Adrenal gland (tissue), 19 donors: ENCODE measurements at regions of chr10 and their contacts with region 1.

Region 1: GRCh38 chr10:43292755-43293676 is 26.2 kb upstream of the RASGEF1A start:
- DNase-seq: peak; percentile 50 to 84 (median 69)
- H3K4me3 ChIP-seq: no peak overlapping the region
- H3K27ac ChIP-seq: no peak overlapping the region
- H3K4me1 ChIP-seq: no peaks in the 10 kb centered on the region
- H3K27me3 ChIP-seq: no peaks in the 10 kb centered on the region
- CTCF ChIP-seq: peak; percentile 53 to 82 (median 70)
- POLR2A ChIP-seq: no peak

Region 2: GRCh38 chr10:43138021-43138756 is 154.8 kb before region 1 on chr10 and contains the start of gene CSGALNACT2:
- intact Hi-C with region 1: no loop called
- DNase-seq: peak; percentile 84 to 92 (median 86)
- H3K4me3 ChIP-seq: peak within 1 kb of the TSS; percentile 64 to 85 (median 78)
- H3K27ac ChIP-seq: peak within 1 kb of the TSS; percentile 48 to 99 (median 95)
- H3K4me1 ChIP-seq: peaks cover 6 to 24% of the 10 kb centered on the region in 2 donors
- H3K27me3 ChIP-seq: no peaks in the 10 kb centered on the region
- CTCF ChIP-seq: peak in 1 of 6 experiments; percentile 3
- POLR2A ChIP-seq: peak; percentile 82 to 88
- total RNA-seq, gene CSGALNACT2: 7.4 to 19.4 (median 13.3) TPM

Region 3: GRCh38 chr10:43204943-43205671 is 87.9 kb before region 1 on chr10:
- intact Hi-C with region 1: no loop called
- DNase-seq: peak; percentile 35 to 74 (median 59)
- H3K4me3 ChIP-seq: no peak overlapping the region
- H3K27ac ChIP-seq: no peak overlapping the region
- H3K4me1 ChIP-seq: peaks cover 4 to 21% of the 10 kb centered on the region in 2 donors
- H3K27me3 ChIP-seq: no peaks in the 10 kb centered on the region
- CTCF ChIP-seq: peak; percentile 54 to 70 (median 67)
- POLR2A ChIP-seq: no peak

Region 4: DNA sequence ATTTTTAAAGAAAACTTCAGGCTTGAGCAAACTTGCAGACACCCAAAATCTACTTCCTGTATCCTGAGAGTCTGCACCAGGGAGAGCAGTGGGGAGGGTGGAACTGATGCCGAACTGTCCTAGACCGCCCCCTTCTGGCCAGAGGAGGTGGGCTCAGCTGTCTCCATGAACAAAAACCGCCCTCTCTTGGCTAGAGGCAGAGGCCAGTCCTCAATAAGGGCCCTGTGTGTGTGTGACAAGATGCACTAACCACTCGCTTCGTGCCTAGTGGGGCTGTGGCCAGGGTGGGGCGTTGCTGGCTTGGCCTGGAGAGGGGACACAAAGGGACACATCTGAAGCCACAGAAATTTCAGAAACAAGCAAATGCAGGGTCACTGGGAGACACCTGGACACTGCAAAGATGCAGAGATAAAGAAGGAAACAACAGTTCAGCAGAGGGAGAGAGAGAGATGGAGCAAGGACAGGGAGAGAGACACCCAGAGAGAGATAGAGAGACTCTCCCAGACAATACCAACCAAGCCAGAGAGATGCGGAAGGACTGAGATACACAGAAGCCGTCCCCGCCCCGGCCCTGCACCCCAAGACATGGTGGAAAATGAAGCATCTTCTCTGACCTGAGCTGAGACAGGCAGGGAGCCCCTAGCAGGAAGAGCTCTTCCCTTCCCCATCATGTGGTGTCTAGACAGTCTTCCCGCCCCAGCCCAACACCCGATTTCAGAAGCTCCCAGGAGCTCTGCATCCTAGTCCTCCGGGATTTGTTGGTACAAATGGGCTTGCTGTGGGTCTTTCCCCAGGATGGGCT is 55.7 kb after region 1 on chr10:
- intact Hi-C with region 1: loop called (anchors 2 to 10 kb)
- DNase-seq: peak; percentile 82 to 93 (median 86)
- H3K4me3 ChIP-seq: no peak overlapping the region
- H3K27ac ChIP-seq: no peak overlapping the region
- H3K4me1 ChIP-seq: peaks cover 0 to 4% of the 10 kb centered on the region in 2 donors
- H3K27me3 ChIP-seq: peaks cover 4% of the 10 kb centered on the region
- CTCF ChIP-seq: peak; percentile 84 to 94 (median 88)
- POLR2A ChIP-seq: no peak

Region 5: GRCh38 chr10:43461950-43462349 is 168.9 kb after region 1 on chr10:
- intact Hi-C with region 1: loop called (anchors 5 to 10 kb)
- DNase-seq: peak in 4 of 7 donors; percentile 31 to 49 (median 47)
- H3K4me3 ChIP-seq: peak overlapping the region in 1 of 4 donors; percentile 9
- H3K27ac ChIP-seq: no peak overlapping the region
- H3K4me1 ChIP-seq: peaks cover 0 to 4% of the 10 kb centered on the region in 2 donors
- H3K27me3 ChIP-seq: no peaks in the 10 kb centered on the region
- CTCF ChIP-seq: peak; percentile 63 to 85 (median 78)
- POLR2A ChIP-seq: no peak